K562 (cell line): ENCODE measurements at regions of chr4 and their contacts with region 1.

Region 1: GRCh38 chr4:74376888-74377483 is 12.0 kb downstream of the EREG start:
- DNase-seq: peak; percentile 28 to 72 (median 44)
- ATAC-seq: peak; percentile 83
- H3K4me3 ChIP-seq: no peak overlapping the region
- H3K27ac ChIP-seq: no peak overlapping the region
- H3K4me1 ChIP-seq: peaks cover 5 to 29% of the 10 kb centered on the region in 2 experiments; a peak in 3 of 5 replicates
- H3K27me3 ChIP-seq: no peaks in the 10 kb centered on the region
- CTCF ChIP-seq: peak in 2 of 3 experiments; percentile 63 to 82; a peak in 4 of 6 replicates
- EP300 ChIP-seq: no peak
- POLR2A ChIP-seq: no peak
- RAD21 ChIP-seq: peak; percentile 90 to 93

Region 2: GRCh38 chr4:74189331-74190043 is 187.5 kb before region 1 on chr4:
- CTCF ChIA-PET with region 1: no interaction called
- POLR2A ChIA-PET with region 1: no interaction called
- in situ Hi-C with region 1: no loop called
- intact Hi-C with region 1: loop called (anchors 5 kb)
- DNase-seq: peak; percentile 33 to 70 (median 42)
- ATAC-seq: peak; percentile 67
- H3K4me3 ChIP-seq: no peak overlapping the region
- H3K27ac ChIP-seq: no peak overlapping the region
- H3K4me1 ChIP-seq: no peaks in the 10 kb centered on the region
- H3K27me3 ChIP-seq: no peaks in the 10 kb centered on the region
- CTCF ChIP-seq: peak; percentile 46 to 75 (median 55); a peak in 5 of 6 replicates
- EP300 ChIP-seq: no peak
- POLR2A ChIP-seq: no peak
- RAD21 ChIP-seq: peak; percentile 67 to 69

Region 3: GRCh38 chr4:74444891-74445642 is 68.1 kb after region 1 on chr4 and contains the start of gene AREG:
- CTCF ChIA-PET with region 1: no interaction called
- POLR2A ChIA-PET with region 1: interaction called, 3 read pairs
- in situ Hi-C with region 1: no loop called
- intact Hi-C with region 1: loop called (anchors 2 kb)
- DNase-seq: peak; percentile 78 to 91 (median 84)
- ATAC-seq: peak; percentile 83
- H3K4me3 ChIP-seq: peak within 1 kb of the TSS; percentile 57
- H3K27ac ChIP-seq: peak within 1 kb of the TSS; percentile 74
- H3K4me1 ChIP-seq: peaks cover 7 to 31% of the 10 kb centered on the region in 2 experiments; a peak in 3 of 5 replicates
- H3K27me3 ChIP-seq: no peaks in the 10 kb centered on the region
- CTCF ChIP-seq: peak; percentile 69 to 87 (median 69)
- EP300 ChIP-seq: no peak
- POLR2A ChIP-seq: peak; percentile 62
- RAD21 ChIP-seq: peak in 1 of 2 experiments; percentile 56; a peak in 2 of 4 replicates
- polyA plus RNA-seq, gene AREG: 1.4 to 2.4 TPM

Region 4: DNA sequence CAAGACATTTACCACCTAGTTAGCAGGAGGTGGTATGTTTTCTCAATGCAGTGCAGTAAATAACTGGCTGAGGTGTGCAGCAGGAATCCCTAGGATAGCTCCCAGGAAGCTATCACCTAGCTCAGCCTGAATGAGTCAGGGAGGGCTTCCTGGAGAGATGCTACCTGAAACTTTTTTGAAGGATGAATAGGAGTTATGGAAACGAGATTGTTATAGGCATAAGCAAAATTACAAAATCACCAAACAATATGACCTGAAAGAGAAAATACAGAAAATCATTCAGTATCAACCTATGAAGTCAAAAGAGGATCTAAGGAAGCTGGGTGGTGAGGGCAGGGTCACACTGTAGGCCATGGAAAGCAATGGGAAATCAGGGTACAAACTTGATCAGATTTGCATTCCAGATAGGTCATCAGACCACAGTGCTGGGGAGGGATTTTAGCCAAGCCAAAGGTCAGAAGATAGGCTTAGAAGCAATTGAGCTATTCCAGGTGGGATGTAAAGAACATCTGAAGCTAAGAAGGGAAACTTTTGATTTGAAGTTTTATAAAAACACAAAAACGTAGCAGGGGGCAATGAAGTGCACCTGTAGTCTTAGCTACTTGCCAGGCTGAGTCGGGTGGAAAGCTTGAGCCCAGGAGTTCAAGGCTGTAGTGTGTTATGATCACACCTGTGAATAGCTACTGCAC is 79.2 kb after region 1 on chr4:
- CTCF ChIA-PET with region 1: no interaction called
- POLR2A ChIA-PET with region 1: no interaction called
- in situ Hi-C with region 1: loop called (anchors 5 kb)
- intact Hi-C with region 1: no loop called
- DNase-seq: no peak
- ATAC-seq: no peak
- H3K4me3 ChIP-seq: no peak overlapping the region
- H3K27ac ChIP-seq: no peak overlapping the region
- H3K4me1 ChIP-seq: peaks cover 5 to 21% of the 10 kb centered on the region in 2 experiments; a peak in 3 of 5 replicates
- H3K27me3 ChIP-seq: no peaks in the 10 kb centered on the region
- CTCF ChIP-seq: no peak
- EP300 ChIP-seq: no peak
- POLR2A ChIP-seq: no peak
- RAD21 ChIP-seq: no peak

Region 5: DNA sequence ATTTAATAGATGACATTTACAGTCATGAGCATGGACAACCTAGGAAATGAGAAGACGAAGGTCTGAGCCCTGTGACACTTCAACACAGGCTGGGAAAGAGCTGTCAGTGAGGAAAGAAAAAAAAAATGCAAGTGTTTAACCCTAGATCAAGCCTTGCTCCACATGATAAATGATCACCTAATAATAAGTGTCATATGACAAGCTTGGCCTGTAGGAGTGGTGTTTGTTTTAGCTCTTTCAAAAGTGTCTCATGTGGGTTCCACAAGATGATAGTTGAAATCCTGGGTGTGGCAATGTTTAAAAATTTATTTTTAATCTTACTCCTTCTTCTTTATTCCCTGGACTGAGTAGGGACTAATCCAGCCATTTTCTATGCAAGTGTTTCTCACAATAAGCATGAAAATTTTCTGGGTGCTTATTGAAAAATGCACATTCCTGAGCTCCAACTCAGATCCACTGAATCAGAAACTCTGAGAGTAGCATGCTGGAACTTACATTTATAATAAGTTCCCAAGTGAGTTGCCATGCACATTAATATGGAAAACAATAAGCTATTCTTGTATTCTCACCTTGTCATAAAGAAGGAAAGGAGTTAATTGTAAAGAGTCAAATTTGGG is 206.2 kb after region 1 on chr4:
- CTCF ChIA-PET with region 1: interaction called, 10 read pairs
- POLR2A ChIA-PET with region 1: no interaction called
- in situ Hi-C with region 1: no loop called
- intact Hi-C with region 1: no loop called
- DNase-seq: no peak
- ATAC-seq: no peak
- H3K4me3 ChIP-seq: no peak overlapping the region
- H3K27ac ChIP-seq: no peak overlapping the region
- H3K4me1 ChIP-seq: no peaks in the 10 kb centered on the region
- H3K27me3 ChIP-seq: no peaks in the 10 kb centered on the region
- CTCF ChIP-seq: no peak
- EP300 ChIP-seq: no peak
- POLR2A ChIP-seq: no peak
- RAD21 ChIP-seq: no peak

Region 6: GRCh38 chr4:74623041-74623440 is 246.1 kb after region 1 on chr4:
- CTCF ChIA-PET with region 1: interaction called, 11 read pairs
- POLR2A ChIA-PET with region 1: no interaction called
- in situ Hi-C with region 1: no loop called
- intact Hi-C with region 1: loop called (anchors 1 kb)
- DNase-seq: peak; percentile 53 to 77 (median 59)
- ATAC-seq: peak; percentile 95
- H3K4me3 ChIP-seq: no peak overlapping the region
- H3K27ac ChIP-seq: no peak overlapping the region
- H3K4me1 ChIP-seq: peaks cover 0 to 8% of the 10 kb centered on the region in 2 experiments; a peak in 2 of 5 replicates
- H3K27me3 ChIP-seq: no peaks in the 10 kb centered on the region
- CTCF ChIP-seq: peak; percentile 73 to 79 (median 76)
- EP300 ChIP-seq: no peak
- POLR2A ChIP-seq: no peak
- RAD21 ChIP-seq: peak; percentile 88 to 90

Region 7: DNA sequence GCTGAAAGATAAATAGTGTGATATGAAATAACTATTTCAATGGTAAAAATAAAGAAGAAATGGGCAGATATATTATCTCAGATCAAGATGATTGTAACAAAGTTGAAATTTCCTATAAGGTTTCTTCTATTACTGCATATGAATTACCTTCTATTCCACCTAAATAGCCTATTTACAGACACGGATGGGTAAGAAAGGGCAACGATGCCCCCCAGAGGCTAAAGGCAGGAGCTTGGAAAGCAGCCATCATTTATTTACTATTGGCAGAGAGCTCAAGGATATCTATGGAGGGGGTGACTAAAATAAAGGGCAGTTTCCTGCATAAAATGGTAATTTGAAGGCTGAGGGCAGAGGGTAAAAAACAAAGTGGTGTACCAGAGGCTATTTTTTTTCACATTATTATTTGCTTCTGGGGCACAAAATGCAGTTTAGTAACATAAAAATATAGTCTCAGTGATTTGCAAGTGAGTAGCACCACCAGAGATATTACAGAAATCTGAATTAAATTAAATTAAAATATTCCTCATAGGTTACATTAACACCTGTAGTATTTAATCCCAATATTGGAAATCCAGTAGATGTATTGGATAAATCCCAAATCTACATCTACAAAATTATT is 294.2 kb after region 1 on chr4:
- CTCF ChIA-PET with region 1: interaction called, 5 read pairs
- POLR2A ChIA-PET with region 1: no interaction called
- in situ Hi-C with region 1: loop called (anchors 5 kb)
- intact Hi-C with region 1: loop called (anchors 1 kb)
- DNase-seq: peak; percentile 10 to 74 (median 37)
- ATAC-seq: peak; percentile 87
- H3K4me3 ChIP-seq: no peak overlapping the region
- H3K27ac ChIP-seq: no peak overlapping the region
- H3K4me1 ChIP-seq: no peaks in the 10 kb centered on the region
- H3K27me3 ChIP-seq: no peaks in the 10 kb centered on the region
- CTCF ChIP-seq: peak; percentile 70 to 90 (median 71)
- EP300 ChIP-seq: no peak
- POLR2A ChIP-seq: no peak
- RAD21 ChIP-seq: peak; percentile 88 to 92